Vagina (tissue), 2 donors: ENCODE measurements at regions of chr4 and their contacts with region 1.

Region 1: GRCh38 chr4:114229706-114230105 is 250.3 kb upstream of the ARSJ start:
- DNase-seq: no peak
- H3K4me3 ChIP-seq: no peak overlapping the region
- H3K27ac ChIP-seq: no peak overlapping the region
- H3K4me1 ChIP-seq: no peaks in the 10 kb centered on the region
- H3K27me3 ChIP-seq: no peaks in the 10 kb centered on the region
- CTCF ChIP-seq: no peak
- POLR2A ChIP-seq: no peak

Region 2: DNA sequence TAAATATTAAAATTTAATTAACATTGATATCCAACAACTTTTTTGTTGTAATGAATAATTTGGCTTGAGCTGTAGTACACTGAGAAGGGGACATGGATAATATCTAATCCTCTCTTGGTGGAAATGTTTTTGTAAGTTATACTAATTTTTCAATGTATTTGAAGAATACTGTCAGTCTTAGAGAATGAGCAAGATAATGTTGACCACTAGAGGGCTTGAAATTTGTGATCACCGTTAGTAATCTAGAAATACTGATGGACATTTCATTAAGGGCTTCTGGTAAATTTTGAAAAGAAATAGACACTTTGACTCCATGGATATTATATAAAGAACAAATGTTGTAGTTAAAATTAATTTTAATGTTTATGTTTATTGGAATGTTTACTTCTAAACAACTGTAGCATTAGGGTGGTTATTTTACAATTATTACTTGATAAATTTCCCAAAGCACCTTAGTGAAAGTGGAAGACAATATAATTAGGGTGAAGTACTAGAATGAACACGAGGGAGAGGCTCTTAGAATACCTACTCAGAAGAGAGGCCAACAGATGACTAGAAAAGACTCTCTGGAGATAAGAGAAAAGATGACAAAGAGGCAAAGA is 448.2 kb before region 1 on chr4:
- intact Hi-C with region 1: no loop called
- DNase-seq: no peak
- H3K4me3 ChIP-seq: no peak overlapping the region
- H3K27ac ChIP-seq: no peak overlapping the region
- H3K4me1 ChIP-seq: peaks cover 8% of the 10 kb centered on the region
- H3K27me3 ChIP-seq: no peaks in the 10 kb centered on the region
- CTCF ChIP-seq: peak in 2 of 3 experiments; percentile 7 to 53
- POLR2A ChIP-seq: no peak

Region 3: GRCh38 chr4:114146947-114147618 is 82.6 kb before region 1 on chr4:
- intact Hi-C with region 1: loop called (anchors 10 kb)
- DNase-seq: no peak
- H3K4me3 ChIP-seq: no peak overlapping the region
- H3K27ac ChIP-seq: no peak overlapping the region
- H3K4me1 ChIP-seq: no peaks in the 10 kb centered on the region
- H3K27me3 ChIP-seq: no peaks in the 10 kb centered on the region
- CTCF ChIP-seq: no peak
- POLR2A ChIP-seq: no peak

Region 4: DNA sequence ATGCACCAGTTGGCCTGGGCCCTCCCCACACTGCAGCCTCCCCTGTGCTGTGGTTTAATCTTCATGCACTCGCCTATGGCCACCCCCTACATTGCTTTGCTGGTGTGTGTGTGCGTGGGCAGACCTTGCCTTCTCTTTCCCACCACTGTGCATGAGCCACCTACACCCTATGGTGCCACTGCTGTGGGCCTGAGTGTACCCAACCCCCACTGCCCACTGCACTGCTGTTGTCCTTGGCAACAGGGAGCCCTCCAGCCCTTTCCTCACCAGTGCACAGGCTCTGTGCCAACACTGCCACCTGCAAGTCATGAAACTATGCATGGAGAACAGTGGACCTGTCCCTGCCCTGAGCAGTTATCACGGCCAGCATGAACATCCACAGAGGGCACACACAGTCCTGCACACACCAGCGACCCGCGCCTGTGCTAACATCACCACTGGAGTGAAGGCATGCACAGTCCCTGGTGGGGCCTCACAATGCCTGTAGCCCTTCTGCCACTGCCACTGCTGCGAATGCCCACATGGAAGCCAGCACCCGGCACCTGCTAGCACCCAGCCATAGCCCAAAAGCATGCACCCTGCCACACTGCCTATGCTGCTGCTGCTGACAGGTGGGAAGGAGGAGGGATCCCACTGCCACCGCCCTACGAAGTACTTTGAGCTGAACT is 12.4 kb before region 1 on chr4:
- intact Hi-C with region 1: no loop called
- DNase-seq: no peak
- H3K4me3 ChIP-seq: no peak overlapping the region
- H3K27ac ChIP-seq: no peak overlapping the region
- H3K4me1 ChIP-seq: no peaks in the 10 kb centered on the region
- H3K27me3 ChIP-seq: no peaks in the 10 kb centered on the region
- CTCF ChIP-seq: no peak
- POLR2A ChIP-seq: no peak

Region 5: GRCh38 chr4:114250439-114250891 is 20.8 kb after region 1 on chr4:
- intact Hi-C with region 1: no loop called
- DNase-seq: no peak
- H3K4me3 ChIP-seq: no peak overlapping the region
- H3K27ac ChIP-seq: no peak overlapping the region
- H3K4me1 ChIP-seq: no peaks in the 10 kb centered on the region
- H3K27me3 ChIP-seq: no peaks in the 10 kb centered on the region
- CTCF ChIP-seq: no peak
- POLR2A ChIP-seq: no peak